ENCODE measurements at regions of chr18 and their contacts with region 1.

Region 1: GRCh38 chr18:73124175-73124574 is 256.4 kb upstream of the NETO1 start:
- DNase-seq: no peak
- H3K4me3 ChIP-seq: no peak overlapping the region
- H3K27ac ChIP-seq: no peak overlapping the region
- H3K4me1 ChIP-seq: no peaks in the 10 kb centered on the region
- CTCF ChIP-seq: no peak

Region 2: DNA sequence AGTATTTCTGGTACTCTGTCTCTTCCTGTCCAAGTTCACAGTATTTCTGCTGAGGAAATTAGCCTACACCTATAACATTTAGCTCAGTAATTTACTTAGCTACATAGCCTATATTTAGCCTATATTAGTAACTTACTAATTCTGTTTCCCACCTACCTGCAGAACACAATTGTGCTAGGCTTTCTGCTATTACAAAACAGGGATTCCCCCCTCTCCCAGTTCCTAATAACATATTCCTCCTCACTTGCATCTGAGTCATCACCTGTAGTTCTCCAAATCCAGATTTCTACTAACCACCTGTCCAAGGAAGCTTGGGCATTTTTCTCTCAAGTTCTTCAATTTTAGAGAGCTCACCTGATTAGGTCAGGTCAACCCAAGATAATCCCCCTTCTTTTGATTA is 351.3 kb before region 1 on chr18:
- CTCF ChIA-PET with region 1: no interaction called
- POLR2A ChIA-PET with region 1: no interaction called
- intact Hi-C with region 1: loop called (anchors 10 kb)
- DNase-seq: no peak
- H3K4me3 ChIP-seq: no peak overlapping the region
- H3K27ac ChIP-seq: no peak overlapping the region
- H3K4me1 ChIP-seq: no peaks in the 10 kb centered on the region
- CTCF ChIP-seq: no peak

Measured in OCI-LY7 (cell line).